ENCODE measurements at regions of chr1 and their contacts with region 1.

Region 1: GRCh38 chr1:54121482-54122134 is 31.2 kb downstream of the CDCP2 start:
- DNase-seq: peak; percentile 68 to 90 (median 82)
- H3K4me3 ChIP-seq: peak overlapping the region in 1 of 4 donors; percentile 5
- H3K27ac ChIP-seq: no peak overlapping the region
- H3K4me1 ChIP-seq: peaks cover 0 to 10% of the 10 kb centered on the region in 2 donors
- H3K27me3 ChIP-seq: no peaks in the 10 kb centered on the region
- CTCF ChIP-seq: peak; percentile 57 to 79 (median 68)
- POLR2A ChIP-seq: no peak

Region 2: GRCh38 chr1:53821380-53821779 is 300.2 kb before region 1 on chr1:
- intact Hi-C with region 1: no loop called
- DNase-seq: no peak
- H3K4me3 ChIP-seq: no peak overlapping the region
- H3K27ac ChIP-seq: no peak overlapping the region
- H3K4me1 ChIP-seq: no peaks in the 10 kb centered on the region
- H3K27me3 ChIP-seq: no peaks in the 10 kb centered on the region
- CTCF ChIP-seq: no peak
- POLR2A ChIP-seq: no peak

Region 3: DNA sequence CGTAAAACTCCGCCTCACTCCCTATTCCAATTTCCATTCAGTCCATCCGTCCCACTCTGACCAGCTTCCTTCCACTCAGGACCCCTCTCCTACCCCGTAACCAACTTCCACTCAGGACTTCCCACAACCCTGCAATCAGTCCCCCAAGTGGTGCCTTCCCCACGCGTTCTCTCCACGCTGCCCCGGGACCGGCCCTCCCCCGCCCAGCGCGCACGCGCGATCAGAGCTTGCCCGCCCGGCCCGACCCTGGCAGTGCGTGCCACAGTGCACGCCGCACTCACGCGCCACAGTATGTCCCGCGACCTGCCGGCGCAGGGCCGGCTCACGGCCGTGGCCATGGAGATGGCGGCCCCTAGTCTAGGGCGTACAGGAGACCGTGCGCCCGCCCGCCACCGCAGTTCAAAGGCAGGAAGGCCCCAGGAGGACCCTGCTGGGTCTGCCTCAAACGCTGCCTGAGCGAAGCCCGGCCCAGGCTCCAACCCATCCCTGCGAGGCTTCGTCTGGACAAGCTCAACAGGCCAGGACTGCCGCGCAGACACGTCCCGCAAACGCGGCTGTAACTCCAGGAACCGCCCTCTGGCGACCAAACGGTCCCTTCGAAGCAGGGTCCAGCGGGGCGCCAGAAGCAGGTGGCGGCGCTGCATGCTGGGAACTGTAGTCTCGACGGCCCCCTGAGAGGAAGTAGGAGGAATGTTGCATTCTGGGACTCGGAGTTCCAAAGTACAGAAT is 283.5 kb before region 1 on chr1 and contains the start of gene NDC1:
- intact Hi-C with region 1: no loop called
- DNase-seq: peak; percentile 90 to 95 (median 93)
- H3K4me3 ChIP-seq: peak within 1 kb of the TSS; percentile 40 to 98 (median 70)
- H3K27ac ChIP-seq: peak within 1 kb of the TSS; percentile 86 to 99 (median 95)
- H3K4me1 ChIP-seq: peaks cover 4 to 9% of the 10 kb centered on the region in 2 donors
- H3K27me3 ChIP-seq: no peaks in the 10 kb centered on the region
- CTCF ChIP-seq: peak in 3 of 6 experiments; percentile 10 to 31 (median 25)
- POLR2A ChIP-seq: peak; percentile 19 to 63
- total RNA-seq, gene NDC1: 8.2 to 21.9 (median 10.5) TPM

Region 4: DNA sequence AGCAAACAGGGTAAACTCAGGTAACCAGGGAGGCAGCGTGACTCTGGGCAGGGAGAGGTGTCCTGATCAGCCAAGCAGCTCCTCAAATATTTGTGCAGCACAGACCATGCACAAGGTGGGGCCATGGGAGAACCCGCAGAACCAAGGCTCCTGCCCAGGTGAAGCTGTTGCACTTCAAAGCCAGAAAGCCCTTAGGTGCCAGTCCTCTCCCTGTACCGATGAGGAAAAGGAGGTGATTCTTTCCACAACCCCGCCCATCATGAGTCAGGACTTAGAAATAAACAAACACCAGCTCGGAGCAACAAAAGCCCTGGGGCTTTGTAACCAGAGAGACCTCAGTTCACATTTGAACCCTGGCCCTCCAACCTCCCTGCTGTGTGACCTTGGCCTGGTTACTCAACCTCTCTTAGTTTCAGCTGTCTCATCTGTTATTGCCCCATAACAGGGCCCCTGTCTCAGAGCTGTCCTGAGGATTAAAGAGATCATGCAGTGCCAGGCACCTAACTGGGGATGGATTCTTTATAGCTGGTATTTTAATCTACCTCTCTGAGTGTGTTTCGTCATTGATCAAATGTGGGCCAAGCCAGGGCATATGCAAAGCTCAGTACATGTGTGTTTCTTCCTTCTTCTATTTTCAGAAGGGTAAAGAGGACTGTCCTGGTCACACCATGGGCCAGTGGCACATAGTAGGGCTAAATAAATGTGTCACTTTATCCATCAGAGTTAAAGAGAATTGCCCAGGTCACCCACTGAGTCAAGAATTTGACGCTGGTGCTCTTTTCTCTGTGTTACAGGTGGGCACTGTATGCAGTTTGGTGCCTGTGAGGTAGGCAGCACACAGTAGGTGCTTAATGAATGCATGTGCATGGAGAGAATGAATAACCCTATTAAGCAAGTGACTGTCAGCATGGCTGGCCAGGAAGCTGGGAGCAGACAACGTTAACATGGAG is 105.0 kb before region 1 on chr1:
- intact Hi-C with region 1: no loop called
- DNase-seq: peak in 6 of 7 donors; percentile 49 to 79 (median 62)
- H3K4me3 ChIP-seq: no peak overlapping the region
- H3K27ac ChIP-seq: no peak overlapping the region
- H3K4me1 ChIP-seq: peaks cover 0 to 3% of the 10 kb centered on the region in 2 donors
- H3K27me3 ChIP-seq: no peaks in the 10 kb centered on the region
- CTCF ChIP-seq: no peak
- POLR2A ChIP-seq: no peak

Region 5: GRCh38 chr1:54081306-54082270 is 40.0 kb before region 1 on chr1:
- intact Hi-C with region 1: no loop called
- DNase-seq: peak; percentile 40 to 84 (median 69)
- H3K4me3 ChIP-seq: no peak overlapping the region
- H3K27ac ChIP-seq: no peak overlapping the region
- H3K4me1 ChIP-seq: no peaks in the 10 kb centered on the region
- H3K27me3 ChIP-seq: no peaks in the 10 kb centered on the region
- CTCF ChIP-seq: peak; percentile 46 to 68 (median 60)
- POLR2A ChIP-seq: no peak

Region 6: GRCh38 chr1:54273092-54273794 is 151.6 kb after region 1 on chr1:
- intact Hi-C with region 1: loop called in 1 of 2 experiments (anchors 10 kb)
- DNase-seq: peak; percentile 89 to 98 (median 95)
- H3K4me3 ChIP-seq: no peak overlapping the region
- H3K27ac ChIP-seq: peak overlapping the region; percentile 90 to 99 (median 96)
- H3K4me1 ChIP-seq: peaks cover 53 to 70% of the 10 kb centered on the region in 2 donors
- H3K27me3 ChIP-seq: no peaks in the 10 kb centered on the region
- CTCF ChIP-seq: peak in 4 of 6 experiments; percentile 4 to 75 (median 70)
- POLR2A ChIP-seq: peak in 1 of 2 donors; percentile 56

Region 7: GRCh38 chr1:54406339-54407153 is 284.9 kb after region 1 on chr1 and contains the start of gene SSBP3:
- intact Hi-C with region 1: loop called in 1 of 2 experiments (anchors 5 kb)
- DNase-seq: peak; percentile 90 to 94 (median 92)
- H3K4me3 ChIP-seq: peak within 1 kb of the TSS in 3 of 4 donors; percentile 40 to 91 (median 83)
- H3K27ac ChIP-seq: peak within 1 kb of the TSS; percentile 83 to 96 (median 92)
- H3K4me1 ChIP-seq: peaks cover 17 to 43% of the 10 kb centered on the region in 2 donors
- H3K27me3 ChIP-seq: no peaks in the 10 kb centered on the region
- CTCF ChIP-seq: peak in 2 of 6 experiments; percentile 30 to 41
- POLR2A ChIP-seq: peak; percentile 86 to 97
- total RNA-seq, gene SSBP3: 15.3 to 91.5 (median 49.7) TPM